BJ (cell line): ENCODE measurements at regions of chr21 and their contacts with region 1.

Region 1: GRCh38 chr21:37172646-37173045 is 94.5 kb downstream of the VPS26C start:
- DNase-seq: no peak
- H3K4me3 ChIP-seq: no peak overlapping the region
- H3K27me3 ChIP-seq: no peaks in the 10 kb centered on the region
- CTCF ChIP-seq: no peak

Region 2: GRCh38 chr21:37184784-37185593 is 12.3 kb after region 1 on chr21:
- CTCF ChIA-PET with region 1: interaction called, 11 read pairs
- POLR2A ChIA-PET with region 1: no interaction called
- DNase-seq: no peak
- H3K4me3 ChIP-seq: no peak overlapping the region
- H3K27me3 ChIP-seq: no peaks in the 10 kb centered on the region
- CTCF ChIP-seq: no peak

Region 3: DNA sequence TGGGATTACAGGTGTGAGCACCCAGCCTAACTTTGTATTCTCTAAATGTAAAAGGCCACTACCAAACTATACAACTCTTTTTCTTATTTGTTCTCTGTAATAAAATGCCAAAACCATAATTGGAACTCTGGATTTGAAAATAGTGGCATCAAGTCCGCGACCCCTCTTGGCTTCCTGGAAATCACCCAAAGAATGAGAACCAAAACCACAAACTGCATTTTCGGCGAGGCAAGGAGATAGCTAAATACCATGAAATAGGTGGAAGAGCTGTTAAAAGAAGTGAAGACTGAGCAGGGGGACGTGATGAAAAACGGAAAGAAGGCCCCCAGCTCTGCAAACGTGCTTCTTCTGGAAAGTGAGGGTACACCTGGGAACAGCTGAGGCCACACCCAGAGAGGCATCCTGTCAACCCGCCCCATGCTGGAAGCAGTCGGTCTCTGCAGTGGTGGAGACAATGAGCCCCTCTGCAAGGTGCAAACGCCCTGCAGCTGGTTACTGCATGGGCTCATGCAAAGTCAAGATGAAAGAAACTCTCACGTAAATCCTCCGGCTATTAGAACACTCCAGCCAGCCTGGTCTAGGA is 71.9 kb after region 1 on chr21:
- CTCF ChIA-PET with region 1: no interaction called
- POLR2A ChIA-PET with region 1: no interaction called
- DNase-seq: no peak
- H3K4me3 ChIP-seq: no peak overlapping the region
- H3K27me3 ChIP-seq: no peaks in the 10 kb centered on the region
- CTCF ChIP-seq: no peak